ENCODE measurements at regions of chr7 and their contacts with region 1.

Region 1: GRCh38 chr7:5704534-5704922 is 76.9 kb downstream of the RNF216 start:
- DNase-seq: peak; percentile 87 to 88
- ATAC-seq: peak; percentile 90
- H3K4me3 ChIP-seq: no peak overlapping the region
- H3K27ac ChIP-seq: no peak overlapping the region
- H3K4me1 ChIP-seq: no peaks in the 10 kb centered on the region
- H3K27me3 ChIP-seq: no peaks in the 10 kb centered on the region

Region 2: GRCh38 chr7:5665094-5666025 is 39.2 kb before region 1 on chr7:
- intact Hi-C with region 1: loop called (anchors 5 kb)
- DNase-seq: peak in 1 of 2 donors; percentile 70
- ATAC-seq: peak; percentile 83
- H3K4me3 ChIP-seq: no peak overlapping the region
- H3K27ac ChIP-seq: no peak overlapping the region
- H3K4me1 ChIP-seq: no peaks in the 10 kb centered on the region
- H3K27me3 ChIP-seq: no peaks in the 10 kb centered on the region

Region 3: DNA sequence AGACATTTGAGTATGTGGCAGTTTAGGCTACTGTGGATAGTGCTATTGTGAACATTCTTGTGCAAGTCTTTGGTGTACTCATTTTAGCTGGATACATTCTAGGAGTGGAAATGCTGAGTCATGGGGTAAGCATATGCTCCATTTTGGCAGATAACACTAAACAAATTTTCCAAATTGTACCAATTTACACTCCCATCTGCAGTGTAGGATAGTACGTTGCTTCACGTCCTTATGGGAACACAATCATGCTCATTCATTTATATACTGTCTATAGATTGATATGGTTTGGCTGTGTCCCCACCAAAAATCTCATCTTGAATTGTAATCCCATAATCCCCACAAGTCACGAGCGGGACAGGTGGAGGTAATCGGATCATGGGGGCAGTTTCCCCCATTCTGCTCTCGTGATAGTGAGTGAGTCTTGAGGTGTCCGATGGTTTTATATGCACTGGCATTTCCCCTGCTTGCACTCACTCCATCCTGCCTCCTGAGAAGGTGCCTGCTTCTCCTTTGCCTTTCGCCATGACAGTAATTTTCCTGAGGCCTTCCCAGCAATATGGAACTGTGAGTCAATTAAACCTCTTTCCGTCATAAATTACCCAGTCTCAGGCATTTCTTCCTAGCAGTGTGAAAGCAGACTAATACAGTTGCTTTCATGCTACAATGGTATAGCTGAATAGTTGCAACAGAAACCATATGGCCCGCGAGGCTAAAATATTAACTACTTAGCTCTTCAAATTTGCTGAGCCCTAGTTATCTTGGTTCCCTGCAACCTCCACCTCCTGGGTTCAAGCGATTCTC is 51.4 kb after region 1 on chr7:
- intact Hi-C with region 1: no loop called
- DNase-seq: no peak
- ATAC-seq: no peak
- H3K4me3 ChIP-seq: no peak overlapping the region
- H3K27ac ChIP-seq: no peak overlapping the region
- H3K4me1 ChIP-seq: no peaks in the 10 kb centered on the region
- H3K27me3 ChIP-seq: no peaks in the 10 kb centered on the region

Region 4: GRCh38 chr7:5780801-5781496 is 76.4 kb after region 1 on chr7:
- intact Hi-C with region 1: loop called in 1 of 2 experiments (anchors 5 kb)
- DNase-seq: peak; percentile 73 to 85
- ATAC-seq: peak; percentile 87
- H3K4me3 ChIP-seq: peak overlapping the region; percentile 78 to 85
- H3K27ac ChIP-seq: peak overlapping the region; percentile 15 to 69
- H3K4me1 ChIP-seq: peaks cover 0 to 3% of the 10 kb centered on the region in 2 donors
- H3K27me3 ChIP-seq: no peaks in the 10 kb centered on the region

Measured in aorta (tissue), 5 donors.